AG04450 (cell line): ENCODE measurements at regions of chr2 and their contacts with region 1.

Region 1: GRCh38 chr2:74250189-74250631 is 51.8 kb downstream of the MTHFD2 start:
- DNase-seq: no peak
- H3K4me3 ChIP-seq: no peak overlapping the region
- H3K27ac ChIP-seq: no peak overlapping the region
- H3K27me3 ChIP-seq: peaks cover 21% of the 10 kb centered on the region
- CTCF ChIP-seq: peak; percentile 77

Region 2: DNA sequence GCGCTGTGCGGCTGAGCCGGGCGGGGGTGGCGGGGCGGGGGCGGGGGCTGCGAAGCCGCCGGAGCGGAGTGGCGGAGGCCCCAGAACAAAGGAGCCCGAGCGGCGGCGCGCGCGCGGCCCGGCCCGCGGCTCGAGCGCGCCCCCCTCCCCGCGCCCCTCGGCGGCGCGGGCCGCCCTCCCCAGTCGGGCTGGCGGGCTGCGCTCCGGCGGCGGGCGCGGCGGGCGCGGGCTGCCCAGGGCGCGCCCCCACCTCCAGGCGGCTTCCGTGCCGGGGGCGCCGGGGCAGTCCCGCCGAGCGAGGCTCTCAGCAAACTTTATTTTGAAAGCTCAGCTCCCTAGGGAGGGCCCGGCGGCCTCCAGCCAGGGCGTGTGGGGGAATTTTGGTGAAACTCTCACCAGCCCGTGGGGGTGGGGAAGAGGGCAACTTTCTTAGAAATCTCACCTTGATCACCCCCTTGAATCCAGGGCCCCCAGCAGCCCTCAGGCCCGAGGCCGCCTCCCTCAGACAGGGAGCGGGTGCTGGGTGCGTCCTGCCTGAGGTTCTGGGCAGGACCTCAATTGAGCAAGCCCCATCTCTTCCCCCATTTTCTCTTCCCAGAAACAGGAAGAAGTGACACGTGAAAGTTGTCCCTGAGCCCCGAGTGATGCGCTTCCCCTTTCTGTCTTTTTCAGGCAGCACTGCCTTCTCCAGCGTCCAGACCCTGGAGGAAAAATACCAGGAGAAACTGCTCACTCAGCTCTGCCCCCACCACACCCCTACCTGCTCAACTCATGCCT is 264.7 kb before region 1 on chr2:
- CTCF ChIA-PET with region 1: no interaction called
- POLR2A ChIA-PET with region 1: no interaction called
- DNase-seq: no peak
- H3K4me3 ChIP-seq: peak overlapping the region; percentile 66
- H3K27ac ChIP-seq: no peak overlapping the region
- H3K27me3 ChIP-seq: no peaks in the 10 kb centered on the region
- CTCF ChIP-seq: no peak

Region 3: GRCh38 chr2:74238879-74239278 is 11.3 kb before region 1 on chr2:
- CTCF ChIA-PET with region 1: interaction called, 17 read pairs
- POLR2A ChIA-PET with region 1: no interaction called
- DNase-seq: no peak
- H3K4me3 ChIP-seq: no peak overlapping the region
- H3K27ac ChIP-seq: no peak overlapping the region
- H3K27me3 ChIP-seq: peaks cover 9% of the 10 kb centered on the region
- CTCF ChIP-seq: no peak

Region 4: GRCh38 chr2:74379851-74380789 is 129.9 kb after region 1 on chr2 and contains the start of gene DCTN1:
- CTCF ChIA-PET with region 1: interaction called, 14 read pairs
- POLR2A ChIA-PET with region 1: no interaction called
- DNase-seq: peak; percentile 45
- H3K4me3 ChIP-seq: peak within 1 kb of the TSS; percentile 72
- H3K27ac ChIP-seq: peak within 1 kb of the TSS; percentile 68
- H3K27me3 ChIP-seq: no peaks in the 10 kb centered on the region
- CTCF ChIP-seq: no peak
- polyA plus RNA-seq, gene DCTN1: 147 and 188 TPM in 2 replicates

Region 5: DNA sequence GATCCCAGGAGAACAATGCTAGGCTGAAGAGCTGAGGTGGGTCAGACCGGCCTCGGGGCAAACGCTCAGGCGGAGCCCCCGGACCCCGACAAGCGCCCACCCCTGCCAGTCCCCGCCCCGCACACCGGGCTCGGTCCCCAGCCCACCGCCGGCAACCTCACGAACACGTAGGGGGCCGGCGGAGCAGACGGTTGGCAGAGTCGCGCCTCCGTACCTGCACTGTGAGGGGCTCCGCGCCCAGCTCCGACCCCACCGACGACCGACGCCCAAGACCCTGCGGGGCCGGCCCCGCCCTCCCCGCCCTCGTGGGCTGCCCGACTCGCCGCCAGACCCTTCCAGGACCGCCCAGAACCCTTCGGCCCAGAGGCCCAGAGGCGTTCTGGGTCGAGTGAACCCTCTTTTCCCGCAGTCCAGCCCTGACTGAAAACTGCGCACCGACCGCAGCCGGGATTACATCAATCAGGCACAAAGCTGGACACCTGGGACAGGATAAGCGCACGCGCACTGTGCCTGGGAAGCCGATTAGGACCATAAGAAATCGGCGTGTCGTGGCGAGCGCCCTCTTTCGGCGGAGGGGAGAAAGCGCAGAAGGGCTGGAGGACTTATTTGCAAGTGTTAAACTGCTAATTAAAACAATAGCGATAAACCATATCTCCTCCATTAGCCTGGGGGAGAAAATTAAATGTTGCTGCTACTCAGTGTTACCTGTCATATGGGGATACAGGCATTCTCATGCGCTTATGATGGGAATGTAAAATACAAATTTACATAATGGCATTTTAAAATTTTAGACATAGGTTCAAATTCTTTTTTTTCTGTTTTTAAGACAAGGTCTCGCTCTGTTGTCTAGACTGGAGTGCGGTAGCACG is 141.6 kb after region 1 on chr2:
- CTCF ChIA-PET with region 1: interaction called, 11 read pairs
- POLR2A ChIA-PET with region 1: no interaction called
- DNase-seq: peak; percentile 72
- H3K4me3 ChIP-seq: peak overlapping the region; percentile 92
- H3K27ac ChIP-seq: peak overlapping the region; percentile 78
- H3K27me3 ChIP-seq: no peaks in the 10 kb centered on the region
- CTCF ChIP-seq: peak; percentile 98

Region 6: GRCh38 chr2:74399785-74400184 is 149.6 kb after region 1 on chr2:
- CTCF ChIA-PET with region 1: interaction called, 10 read pairs
- POLR2A ChIA-PET with region 1: no interaction called
- DNase-seq: no peak
- H3K4me3 ChIP-seq: no peak overlapping the region
- H3K27ac ChIP-seq: no peak overlapping the region
- H3K27me3 ChIP-seq: peaks cover 4% of the 10 kb centered on the region
- CTCF ChIP-seq: peak; percentile 67